Pancreas (tissue), 10 donors: ENCODE measurements at regions of chr12 and their contacts with region 1.

Region 1: GRCh38 chr12:10235761-10236631 is 23.3 kb downstream of the GABARAPL1 start:
- DNase-seq: peak in 1 of 6 donors; percentile 31
- ATAC-seq: peak; percentile 76 to 88 (median 86)
- H3K4me3 ChIP-seq: no peak overlapping the region
- H3K27ac ChIP-seq: no peak overlapping the region
- H3K4me1 ChIP-seq: no peaks in the 10 kb centered on the region
- H3K27me3 ChIP-seq: no peaks in the 10 kb centered on the region
- CTCF ChIP-seq: peak; percentile 63 to 85 (median 78)

Region 2: GRCh38 chr12:9776778-9777177 is 459.2 kb before region 1 on chr12:
- intact Hi-C with region 1: no loop called
- DNase-seq: no peak
- ATAC-seq: no peak
- H3K4me3 ChIP-seq: no peak overlapping the region
- H3K27ac ChIP-seq: no peak overlapping the region
- H3K4me1 ChIP-seq: no peaks in the 10 kb centered on the region
- H3K27me3 ChIP-seq: no peaks in the 10 kb centered on the region
- CTCF ChIP-seq: no peak

Region 3: DNA sequence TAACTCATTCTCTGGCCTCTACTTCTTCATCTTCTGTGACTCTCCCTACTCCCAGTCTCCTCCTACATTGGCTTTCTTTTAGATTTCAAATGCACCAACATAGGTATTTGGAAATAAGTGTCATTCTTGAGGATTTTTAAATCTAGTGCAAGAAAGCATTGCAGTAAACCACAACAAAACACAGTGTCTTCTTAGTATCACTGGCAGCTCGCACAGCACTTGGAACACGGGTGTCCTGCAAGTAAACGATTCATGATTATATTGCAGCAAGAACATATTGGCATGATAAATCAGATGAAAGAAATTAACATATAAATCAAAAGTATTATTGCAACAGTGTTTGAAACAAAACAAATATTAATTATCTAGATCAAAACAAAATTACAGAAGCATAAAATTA is 331.8 kb after region 1 on chr12:
- intact Hi-C with region 1: loop called in 1 of 3 experiments (anchors 5 kb)
- DNase-seq: no peak
- ATAC-seq: no peak
- H3K4me3 ChIP-seq: no peak overlapping the region
- H3K27ac ChIP-seq: no peak overlapping the region
- H3K4me1 ChIP-seq: no peaks in the 10 kb centered on the region
- H3K27me3 ChIP-seq: no peaks in the 10 kb centered on the region
- CTCF ChIP-seq: no peak